ENCODE measurements at regions of chr14 and their contacts with region 1.

Region 1: DNA sequence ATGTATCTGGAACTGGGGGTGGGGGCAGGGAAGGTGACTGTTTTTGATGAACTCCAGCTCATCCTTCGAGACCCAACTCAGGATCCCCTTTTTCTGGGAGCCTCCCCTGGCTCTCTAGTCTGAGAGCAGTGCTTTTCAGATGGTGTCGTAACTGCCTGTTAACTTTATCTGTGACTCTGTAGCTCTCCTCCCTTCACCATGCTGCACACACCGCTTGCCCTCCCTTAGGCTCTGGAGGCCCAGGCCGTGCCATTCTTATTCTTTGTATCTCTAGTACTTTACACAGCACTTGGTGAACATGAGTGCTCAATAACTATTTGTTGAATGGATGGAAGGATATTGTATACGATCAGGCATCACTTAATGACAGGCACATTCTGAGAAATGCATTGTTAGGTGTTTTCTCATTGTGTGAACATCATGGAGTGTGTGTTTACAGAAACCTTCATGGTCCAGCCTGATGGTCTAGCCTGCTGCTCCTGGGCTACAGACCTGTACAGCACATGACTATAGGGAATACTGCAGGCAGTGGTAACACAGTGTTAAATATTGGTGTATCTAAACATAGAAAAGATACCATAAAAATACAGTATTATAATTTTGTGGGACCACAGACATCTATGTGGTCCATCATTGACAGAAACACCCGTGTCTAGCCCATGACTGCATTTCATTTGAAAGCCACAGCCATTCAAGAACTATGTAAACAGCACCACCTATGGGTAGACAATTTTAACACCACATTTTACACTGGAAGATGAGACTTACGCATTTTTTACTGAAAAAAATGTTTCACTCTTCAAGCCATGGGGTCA is 91.8 kb downstream of the EML1 start:
- DNase-seq: no peak
- H3K4me3 ChIP-seq: no peak overlapping the region
- H3K27ac ChIP-seq: no peak overlapping the region
- H3K4me1 ChIP-seq: peaks cover 5 to 12% (median 9%) of the 10 kb centered on the region in 4 donors
- H3K27me3 ChIP-seq: no peaks in the 10 kb centered on the region
- CTCF ChIP-seq: peak; percentile 74 to 81 (median 79)
- EP300 ChIP-seq: no peak
- POLR2A ChIP-seq: no peak

Region 2: DNA sequence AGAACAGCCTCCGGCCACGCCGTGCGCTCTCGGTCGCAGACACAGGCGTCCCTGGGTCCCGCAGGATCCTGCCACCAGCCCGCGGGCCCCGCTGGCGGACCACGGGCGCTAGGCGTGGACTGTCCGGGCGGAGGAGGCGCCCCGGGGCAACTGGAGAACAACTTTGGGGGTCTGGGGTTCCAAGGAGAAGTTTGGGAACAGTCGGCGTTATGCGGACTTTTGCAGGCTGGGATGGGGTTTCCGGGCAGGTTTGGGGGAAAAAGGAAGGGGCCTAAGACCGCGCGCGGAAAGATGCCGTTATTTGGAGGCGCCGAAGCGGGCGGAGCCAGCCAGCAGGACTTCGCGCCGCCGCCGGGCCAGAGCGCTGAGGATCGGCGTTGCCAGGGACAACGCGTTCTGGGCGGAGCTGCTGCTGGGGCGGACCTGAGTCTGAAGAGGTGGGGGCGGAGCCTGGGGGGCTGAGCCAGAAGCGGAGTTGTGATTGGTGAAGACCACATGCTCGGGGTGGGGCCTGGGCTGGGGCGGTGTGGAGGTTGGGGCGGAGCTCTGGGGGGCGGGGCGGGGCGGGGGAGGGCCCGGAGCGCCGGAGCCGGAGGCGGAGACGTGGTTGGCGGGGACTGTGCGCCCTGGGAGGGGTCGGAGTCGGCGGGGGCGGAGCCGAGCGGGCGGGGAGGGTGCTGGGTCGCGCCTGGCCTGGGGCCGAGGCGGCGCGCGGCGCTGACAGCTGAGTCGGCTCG is 201.3 kb before region 1 on chr14 and contains the start of gene CYP46A1:
- intact Hi-C with region 1: loop called (anchors 2 kb)
- DNase-seq: peak; percentile 100
- H3K4me3 ChIP-seq: peak within 1 kb of the TSS; percentile 71 to 89 (median 84)
- H3K27ac ChIP-seq: peak within 1 kb of the TSS; percentile 87 to 95 (median 92)
- H3K4me1 ChIP-seq: peaks cover 13 to 24% (median 17%) of the 10 kb centered on the region in 4 donors
- H3K27me3 ChIP-seq: peaks cover 0 to 11% (median 0%) of the 10 kb centered on the region in 4 donors
- CTCF ChIP-seq: peak in 1 of 3 experiments; percentile 15
- EP300 ChIP-seq: no peak
- POLR2A ChIP-seq: no peak
- total RNA-seq, gene CYP46A1: 1.2 to 2.5 (median 1.9) TPM

Region 3: GRCh38 chr14:99793213-99794150 is 91.6 kb before region 1 on chr14 and contains the start of gene EML1:
- intact Hi-C with region 1: loop called (anchors 5 kb)
- DNase-seq: no peak
- H3K4me3 ChIP-seq: peak within 1 kb of the TSS; percentile 61 to 74 (median 66)
- H3K27ac ChIP-seq: peak within 1 kb of the TSS; percentile 91 to 94 (median 93)
- H3K4me1 ChIP-seq: peaks cover 25 to 69% (median 65%) of the 10 kb centered on the region in 4 donors
- H3K27me3 ChIP-seq: no peaks in the 10 kb centered on the region
- CTCF ChIP-seq: peak in 2 of 3 experiments; percentile 14 to 17
- EP300 ChIP-seq: no peak
- POLR2A ChIP-seq: no peak
- total RNA-seq, gene EML1: 92.3 to 131 (median 119) TPM

Region 4: GRCh38 chr14:99899578-99900178 is 14.6 kb after region 1 on chr14:
- intact Hi-C with region 1: no loop called
- DNase-seq: peak; percentile 39
- H3K4me3 ChIP-seq: no peak overlapping the region
- H3K27ac ChIP-seq: no peak overlapping the region
- H3K4me1 ChIP-seq: no peaks in the 10 kb centered on the region
- H3K27me3 ChIP-seq: no peaks in the 10 kb centered on the region
- CTCF ChIP-seq: peak; percentile 34 to 68 (median 58)
- EP300 ChIP-seq: no peak
- POLR2A ChIP-seq: no peak

Region 5: GRCh38 chr14:99971941-99972747 is 87.1 kb after region 1 on chr14:
- intact Hi-C with region 1: no loop called
- DNase-seq: no peak
- H3K4me3 ChIP-seq: peak overlapping the region; percentile 89 to 94 (median 90)
- H3K27ac ChIP-seq: peak overlapping the region; percentile 70 to 83 (median 82)
- H3K4me1 ChIP-seq: peaks cover 0 to 19% (median 13%) of the 10 kb centered on the region in 4 donors
- H3K27me3 ChIP-seq: no peaks in the 10 kb centered on the region
- CTCF ChIP-seq: no peak
- EP300 ChIP-seq: no peak
- POLR2A ChIP-seq: no peak